Activated T-helper 1 cell treated with anti-CD3 and anti-CD28 coated beads, Interleukin-12 subunit alpha, Interleukin-12 subunit beta, Interleukin-2, Interleukin-4 antibody, amounts not matched to agents 30 ng/mL and 10 ng/mL and 1 ng/mL, durations not matched to agents 14 hours and 24 hours and 36 hours (primary cell): ENCODE measurements at regions of chr11 and their contacts with region 1.

Region 1: GRCh38 chr11:128630367-128631230 is 43.2 kb upstream of the ETS1 start:
- DNase-seq: peak; percentile 81
- H3K4me3 Mint-ChIP-seq: peak overlapping the region; percentile 76
- H3K27ac Mint-ChIP-seq: peak overlapping the region; percentile 96
- H3K4me1 Mint-ChIP-seq: peaks cover 76% of the 10 kb centered on the region
- H3K27me3 Mint-ChIP-seq: peaks cover 4% of the 10 kb centered on the region

Region 2: DNA sequence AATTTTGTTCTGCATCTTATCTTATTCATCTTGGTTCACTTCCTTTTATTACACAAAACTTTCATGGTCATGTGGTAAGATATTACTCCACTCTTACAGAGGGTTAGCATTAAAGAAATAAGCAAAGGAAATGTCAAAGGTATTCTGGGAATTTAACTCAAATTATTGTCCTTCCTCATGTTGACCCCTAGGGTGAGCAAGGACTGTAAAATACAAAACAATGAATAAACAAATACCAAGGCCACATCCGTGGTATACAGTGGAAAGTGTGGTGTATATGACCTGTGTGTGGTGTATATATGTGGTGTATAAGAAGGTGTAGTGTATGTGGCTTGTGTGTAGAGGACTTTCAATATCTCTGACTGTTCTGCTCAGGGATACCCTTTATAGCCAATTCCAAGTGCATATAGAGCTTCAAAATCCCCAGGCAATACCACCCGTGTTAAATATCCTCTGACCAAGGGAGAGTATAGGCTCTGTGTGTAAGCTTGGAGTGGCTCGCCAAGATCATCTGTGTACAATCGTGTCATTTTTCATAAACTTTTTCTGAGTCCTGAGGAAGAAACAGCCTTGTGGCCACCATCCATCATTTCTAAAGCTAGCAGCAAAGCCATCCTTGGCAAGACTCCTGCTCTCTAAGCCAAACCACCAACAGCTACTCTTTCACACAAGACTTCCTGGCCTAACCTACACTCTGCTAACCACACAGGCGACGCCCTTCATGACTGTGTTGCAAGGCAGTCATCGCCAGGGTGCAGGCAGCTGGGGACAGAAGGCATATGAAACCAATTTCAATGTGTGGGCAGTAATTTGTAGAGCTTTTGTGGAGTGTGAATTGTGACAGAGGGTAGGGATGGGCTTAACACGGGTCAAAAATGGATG is 591.2 kb before region 1 on chr11:
- intact Hi-C with region 1: loop called (anchors 1 kb)
- DNase-seq: peak; percentile 77
- H3K4me3 Mint-ChIP-seq: peak overlapping the region; percentile 68
- H3K27ac Mint-ChIP-seq: peak overlapping the region; percentile 92
- H3K4me1 Mint-ChIP-seq: peaks cover 34% of the 10 kb centered on the region
- H3K27me3 Mint-ChIP-seq: no peaks in the 10 kb centered on the region

Region 3: GRCh38 chr11:128232588-128232987 is 398.0 kb before region 1 on chr11:
- intact Hi-C with region 1: loop called (anchors 1 kb)
- DNase-seq: no peak
- H3K4me3 Mint-ChIP-seq: peak overlapping the region; percentile 58
- H3K27ac Mint-ChIP-seq: peak overlapping the region; percentile 85
- H3K4me1 Mint-ChIP-seq: peaks cover 58% of the 10 kb centered on the region
- H3K27me3 Mint-ChIP-seq: peaks cover 2% of the 10 kb centered on the region

Region 4: DNA sequence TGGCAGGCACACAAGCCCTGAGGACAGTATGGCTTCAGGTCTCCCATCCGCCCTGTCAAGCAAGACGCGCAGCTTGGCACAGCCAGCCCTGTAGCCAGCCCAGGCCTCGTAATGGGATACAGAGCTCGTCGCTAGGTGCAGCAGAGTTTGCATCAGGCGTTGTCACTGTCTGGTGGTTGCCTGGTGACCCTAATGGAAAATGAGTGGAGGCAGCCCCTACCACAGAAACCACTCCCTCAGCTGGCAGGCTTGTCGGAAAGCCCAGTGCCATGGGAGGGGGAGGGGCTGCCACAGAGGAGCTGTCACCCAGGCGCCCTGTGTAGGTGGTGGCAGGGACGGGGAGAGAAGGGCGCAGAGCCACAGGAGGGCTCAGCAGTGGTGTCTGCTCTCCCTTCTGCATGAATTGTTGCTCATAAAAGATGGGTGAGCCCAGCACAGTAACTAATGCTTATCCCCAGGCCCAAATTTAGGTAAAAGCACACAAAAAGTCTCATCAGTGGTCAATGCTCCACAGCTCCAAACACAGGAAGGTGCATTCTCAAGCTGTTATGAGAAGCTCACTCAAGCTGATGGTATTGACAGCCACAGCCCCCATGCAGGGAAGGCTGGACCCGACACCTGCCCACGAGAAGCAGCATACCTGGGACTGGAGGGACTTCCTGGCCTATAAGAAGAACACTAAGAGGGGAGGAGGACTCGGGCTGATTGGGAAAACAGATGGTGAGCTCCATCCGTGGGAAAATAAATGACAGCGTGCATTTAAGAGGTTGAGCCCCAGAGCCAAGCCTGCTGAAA is 207.8 kb before region 1 on chr11:
- intact Hi-C with region 1: loop called (anchors 2 kb)
- DNase-seq: peak; percentile 64
- H3K4me3 Mint-ChIP-seq: peak overlapping the region; percentile 69
- H3K27ac Mint-ChIP-seq: peak overlapping the region; percentile 92
- H3K4me1 Mint-ChIP-seq: peaks cover 38% of the 10 kb centered on the region
- H3K27me3 Mint-ChIP-seq: no peaks in the 10 kb centered on the region

Region 5: DNA sequence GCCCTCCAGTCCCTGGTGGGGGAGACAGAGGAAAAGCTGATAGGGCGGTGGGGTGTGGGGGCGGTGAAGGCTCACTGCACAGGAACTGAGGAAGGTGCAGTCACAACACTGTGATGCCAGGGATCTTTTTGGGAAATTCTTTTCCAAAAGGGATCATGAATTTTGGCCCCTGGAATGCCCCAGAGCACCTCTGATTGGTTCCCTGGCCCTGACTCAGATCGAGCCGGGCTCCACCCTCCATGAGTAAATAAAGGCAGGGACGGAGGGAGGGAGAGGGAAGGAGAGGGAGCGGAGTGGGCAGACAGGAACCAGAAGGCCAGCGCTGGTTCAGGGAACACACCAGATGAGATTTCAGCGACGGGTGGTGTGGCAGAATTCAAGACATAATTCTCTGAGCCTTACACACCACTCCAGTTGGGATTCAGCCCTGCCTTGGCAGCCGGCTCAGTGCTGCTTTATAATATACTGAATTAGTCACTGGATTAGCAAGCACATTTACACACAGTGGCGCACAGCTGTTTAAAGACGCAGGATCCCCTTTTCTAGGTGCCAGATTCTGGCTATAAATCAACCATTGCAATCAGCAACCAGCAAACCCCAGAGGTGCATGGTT is 123.5 kb before region 1 on chr11:
- intact Hi-C with region 1: loop called (anchors 1 kb)
- DNase-seq: no peak
- H3K4me3 Mint-ChIP-seq: peak overlapping the region; percentile 96
- H3K27ac Mint-ChIP-seq: peak overlapping the region; percentile 98
- H3K4me1 Mint-ChIP-seq: peaks cover 100% of the 10 kb centered on the region
- H3K27me3 Mint-ChIP-seq: peaks cover 1% of the 10 kb centered on the region

Region 6: GRCh38 chr11:128582496-128583366 is 47.9 kb before region 1 on chr11:
- intact Hi-C with region 1: loop called (anchors 1 kb)
- DNase-seq: no peak
- H3K4me3 Mint-ChIP-seq: no peak overlapping the region
- H3K27ac Mint-ChIP-seq: peak overlapping the region; percentile 80
- H3K4me1 Mint-ChIP-seq: peaks cover 51% of the 10 kb centered on the region
- H3K27me3 Mint-ChIP-seq: peaks cover 6% of the 10 kb centered on the region

Region 7: GRCh38 chr11:128610721-128611617 is 19.6 kb before region 1 on chr11:
- intact Hi-C with region 1: no loop called
- DNase-seq: peak; percentile 33
- H3K4me3 Mint-ChIP-seq: peak overlapping the region; percentile 73
- H3K27ac Mint-ChIP-seq: peak overlapping the region; percentile 82
- H3K4me1 Mint-ChIP-seq: peaks cover 32% of the 10 kb centered on the region
- H3K27me3 Mint-ChIP-seq: peaks cover 1% of the 10 kb centered on the region

Region 8: DNA sequence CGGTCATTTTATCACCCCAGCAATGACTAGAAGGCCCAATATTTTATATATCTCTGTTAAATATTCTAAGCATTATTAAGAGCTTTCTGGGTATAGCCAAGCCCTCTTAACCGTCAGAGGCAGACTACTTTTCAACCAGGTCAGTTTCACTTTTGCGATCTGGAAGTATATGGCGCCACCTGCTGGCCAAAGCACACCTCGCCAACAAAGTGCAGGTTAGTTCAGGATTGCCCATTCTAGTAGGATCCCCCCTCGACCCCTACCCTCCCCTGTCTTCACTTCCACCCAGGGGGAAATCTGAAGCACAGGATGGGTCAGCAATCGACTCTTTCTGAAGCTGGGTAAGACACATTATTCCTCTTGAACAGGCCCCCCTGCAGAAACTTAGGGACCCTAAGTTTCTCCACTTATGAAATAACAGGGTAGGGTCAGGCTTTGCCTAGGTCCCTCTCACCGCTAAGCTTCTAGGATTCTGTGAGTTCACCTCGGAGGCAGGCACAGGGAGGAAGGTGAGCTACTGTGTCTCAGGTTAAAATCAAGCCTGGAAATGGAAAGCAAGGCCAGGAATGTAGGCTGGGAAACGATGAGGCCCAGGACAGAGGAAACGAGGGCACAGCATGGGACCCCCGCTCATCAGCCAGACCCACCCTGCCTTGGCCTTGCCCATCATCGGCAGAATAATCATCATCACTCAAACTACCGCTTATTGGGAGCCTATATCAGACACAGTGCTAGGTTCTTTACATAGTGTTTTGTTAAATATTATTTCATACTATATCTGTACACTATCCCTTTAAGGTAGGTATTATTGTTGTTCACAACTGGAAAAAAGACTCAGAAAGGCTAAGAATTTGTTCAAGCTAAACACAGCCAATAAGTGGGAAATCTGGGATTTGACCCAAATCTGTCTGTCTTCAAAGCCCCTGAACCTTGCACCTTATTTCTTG is 200.8 kb after region 1 on chr11:
- intact Hi-C with region 1: loop called (anchors 2 kb)
- DNase-seq: peak; percentile 75
- H3K4me3 Mint-ChIP-seq: peak overlapping the region; percentile 68
- H3K27ac Mint-ChIP-seq: peak overlapping the region; percentile 90
- H3K4me1 Mint-ChIP-seq: peaks cover 31% of the 10 kb centered on the region
- H3K27me3 Mint-ChIP-seq: peaks cover 9% of the 10 kb centered on the region